MCF 10A (cell line): ENCODE measurements at regions of chr18 and their contacts with region 1.

Region 1: DNA sequence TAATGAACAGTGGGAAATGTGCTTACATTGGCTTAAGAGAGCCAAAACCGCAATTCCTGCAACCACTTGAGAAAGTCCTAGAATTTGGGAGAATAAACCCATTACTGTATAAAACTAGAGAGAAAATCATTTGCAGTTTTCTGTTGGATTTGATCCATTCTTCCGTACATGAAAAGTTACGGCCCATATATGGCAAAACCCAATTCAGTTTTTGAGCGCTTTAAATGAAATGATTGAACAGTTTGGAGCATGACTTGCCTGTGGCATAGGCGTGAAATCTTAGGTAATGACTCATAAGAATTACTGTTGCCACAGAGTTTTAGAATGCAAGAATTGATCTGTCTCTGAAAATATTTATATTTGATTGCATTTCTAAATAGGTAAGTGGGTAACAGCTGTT is 52.0 kb downstream of the PHLPP1 start:
- DNase-seq: peak; percentile 63
- H3K4me3 Mint-ChIP-seq: peak overlapping the region; percentile 64
- H3K27ac Mint-ChIP-seq: peak overlapping the region; percentile 94
- H3K4me1 Mint-ChIP-seq: peaks cover 57% of the 10 kb centered on the region
- H3K27me3 Mint-ChIP-seq: no peaks in the 10 kb centered on the region
- CTCF ChIP-seq: no peak

Region 2: DNA sequence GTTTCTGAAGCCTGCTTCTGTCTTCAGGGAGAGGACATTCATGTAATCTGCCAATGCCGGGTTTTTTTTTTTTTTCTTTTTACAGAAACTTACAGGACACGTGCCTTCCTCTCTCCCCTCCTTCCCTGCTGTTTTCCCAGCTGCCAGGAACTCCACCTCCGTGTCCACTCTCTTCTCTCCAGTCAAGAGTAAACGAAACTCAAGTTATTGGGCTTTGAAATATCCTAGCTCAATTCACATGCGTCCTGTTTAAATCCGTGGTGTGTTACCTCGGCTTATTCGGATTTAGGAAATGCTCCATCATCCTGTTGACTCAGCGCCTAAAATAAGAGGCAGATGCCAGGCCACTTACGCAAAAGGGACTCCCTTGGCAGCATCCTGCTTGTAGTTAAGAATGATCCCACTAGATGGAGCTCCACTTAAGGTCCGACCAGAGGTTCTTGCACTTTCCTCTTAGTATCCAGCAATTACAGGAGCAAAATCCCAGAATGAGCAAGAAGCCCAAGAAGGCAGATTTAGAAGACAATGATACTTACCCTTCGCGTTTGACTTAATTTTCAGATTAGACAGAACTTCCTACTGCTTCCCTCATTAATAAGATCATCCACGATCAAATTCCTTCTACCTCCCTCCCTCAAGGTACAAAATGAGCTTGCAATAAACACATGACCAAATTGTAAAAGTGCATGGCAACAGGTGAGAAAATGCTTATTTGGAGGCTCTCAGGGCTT is 341.7 kb before region 1 on chr18:
- CTCF ChIA-PET with region 1: no interaction called
- POLR2A ChIA-PET with region 1: no interaction called
- intact Hi-C with region 1: no loop called
- DNase-seq: peak; percentile 97
- H3K4me3 Mint-ChIP-seq: peak overlapping the region; percentile 65
- H3K27ac Mint-ChIP-seq: peak overlapping the region; percentile 90
- H3K4me1 Mint-ChIP-seq: peaks cover 21% of the 10 kb centered on the region
- H3K27me3 Mint-ChIP-seq: no peaks in the 10 kb centered on the region
- CTCF ChIP-seq: peak; percentile 91

Region 3: DNA sequence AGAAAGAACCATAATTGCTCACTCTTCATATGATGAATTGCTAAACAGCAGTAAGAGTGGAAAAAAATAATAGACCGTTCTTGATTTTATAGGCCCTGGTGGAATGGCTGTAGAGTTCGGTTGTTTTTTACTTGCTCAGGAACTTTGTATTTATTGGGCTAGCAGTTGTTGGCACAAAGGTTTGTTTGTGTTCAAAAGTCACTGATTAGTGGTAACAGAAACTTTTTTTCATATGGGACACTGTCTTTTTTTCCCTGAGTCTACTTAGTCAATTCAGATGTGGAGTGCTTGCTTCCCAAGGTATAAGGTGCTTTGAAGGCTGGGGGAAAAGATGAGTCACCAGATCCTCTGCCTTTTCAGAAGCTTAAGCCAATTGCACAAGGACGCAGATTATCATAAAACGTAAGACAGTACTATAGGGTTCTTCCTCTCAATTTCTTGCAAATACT is 26.2 kb before region 1 on chr18:
- CTCF ChIA-PET with region 1: interaction called, 5 read pairs
- POLR2A ChIA-PET with region 1: interaction called, 39 read pairs
- intact Hi-C with region 1: no loop called
- DNase-seq: peak; percentile 88
- H3K4me3 Mint-ChIP-seq: peak overlapping the region; percentile 38
- H3K27ac Mint-ChIP-seq: peak overlapping the region; percentile 72
- H3K4me1 Mint-ChIP-seq: peaks cover 37% of the 10 kb centered on the region
- H3K27me3 Mint-ChIP-seq: no peaks in the 10 kb centered on the region
- CTCF ChIP-seq: no peak

Region 4: DNA sequence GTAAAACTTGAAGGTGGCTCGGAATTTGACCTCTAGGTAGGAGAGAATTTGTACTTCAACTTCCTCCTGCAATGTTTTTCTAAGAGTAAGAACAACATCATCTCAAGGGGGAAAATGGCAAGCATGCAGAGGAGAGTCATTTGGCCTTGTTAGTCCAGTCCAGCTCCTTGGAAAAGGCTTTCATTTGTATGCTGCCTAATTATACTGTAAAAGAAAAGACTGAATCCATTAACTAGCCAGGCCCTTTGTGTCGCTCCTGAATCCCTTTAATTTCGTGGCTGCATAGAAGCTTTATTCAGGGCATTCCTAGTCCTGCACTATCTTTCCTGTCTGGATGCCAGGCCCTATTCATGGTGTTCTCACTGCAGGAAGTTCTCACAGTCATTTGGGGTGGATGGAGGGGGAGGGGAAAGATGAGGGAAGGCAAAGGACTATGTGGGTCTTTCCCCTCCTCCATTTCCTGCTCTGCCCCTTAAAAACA is 15.9 kb before region 1 on chr18:
- CTCF ChIA-PET with region 1: interaction called, 4 read pairs
- POLR2A ChIA-PET with region 1: interaction called, 12 read pairs
- intact Hi-C with region 1: no loop called
- DNase-seq: no peak
- H3K4me3 Mint-ChIP-seq: no peak overlapping the region
- H3K27ac Mint-ChIP-seq: no peak overlapping the region
- H3K4me1 Mint-ChIP-seq: peaks cover 28% of the 10 kb centered on the region
- H3K27me3 Mint-ChIP-seq: no peaks in the 10 kb centered on the region
- CTCF ChIP-seq: no peak

Region 5: GRCh38 chr18:62778976-62779869 is 11.9 kb after region 1 on chr18:
- CTCF ChIA-PET with region 1: interaction called, 3 read pairs
- POLR2A ChIA-PET with region 1: interaction called, 46 read pairs
- intact Hi-C with region 1: no loop called
- DNase-seq: no peak
- H3K4me3 Mint-ChIP-seq: no peak overlapping the region
- H3K27ac Mint-ChIP-seq: peak overlapping the region; percentile 9
- H3K4me1 Mint-ChIP-seq: peaks cover 25% of the 10 kb centered on the region
- H3K27me3 Mint-ChIP-seq: no peaks in the 10 kb centered on the region
- CTCF ChIP-seq: no peak

Region 6: GRCh38 chr18:62784966-62785413 is 17.7 kb after region 1 on chr18:
- CTCF ChIA-PET with region 1: interaction called, 3 read pairs
- POLR2A ChIA-PET with region 1: interaction called, 36 read pairs
- intact Hi-C with region 1: no loop called
- DNase-seq: no peak
- H3K4me3 Mint-ChIP-seq: no peak overlapping the region
- H3K27ac Mint-ChIP-seq: peak overlapping the region; percentile 95
- H3K4me1 Mint-ChIP-seq: peaks cover 37% of the 10 kb centered on the region
- H3K27me3 Mint-ChIP-seq: no peaks in the 10 kb centered on the region
- CTCF ChIP-seq: no peak

Region 7: GRCh38 chr18:62802523-62802922 is 35.2 kb after region 1 on chr18:
- CTCF ChIA-PET with region 1: interaction called, 4 read pairs
- POLR2A ChIA-PET with region 1: interaction called, 10 read pairs
- intact Hi-C with region 1: no loop called
- DNase-seq: peak; percentile 47
- H3K4me3 Mint-ChIP-seq: no peak overlapping the region
- H3K27ac Mint-ChIP-seq: no peak overlapping the region
- H3K4me1 Mint-ChIP-seq: peaks cover 5% of the 10 kb centered on the region
- H3K27me3 Mint-ChIP-seq: no peaks in the 10 kb centered on the region
- CTCF ChIP-seq: peak; percentile 40

Region 8: GRCh38 chr18:62838475-62839098 is 71.3 kb after region 1 on chr18:
- CTCF ChIA-PET with region 1: no interaction called
- POLR2A ChIA-PET with region 1: no interaction called
- intact Hi-C with region 1: no loop called
- DNase-seq: no peak
- H3K4me3 Mint-ChIP-seq: no peak overlapping the region
- H3K27ac Mint-ChIP-seq: no peak overlapping the region
- H3K4me1 Mint-ChIP-seq: peaks cover 7% of the 10 kb centered on the region
- H3K27me3 Mint-ChIP-seq: no peaks in the 10 kb centered on the region
- CTCF ChIP-seq: no peak